ENCODE measurements at regions of chr1 and their contacts with region 1.

Region 1: DNA sequence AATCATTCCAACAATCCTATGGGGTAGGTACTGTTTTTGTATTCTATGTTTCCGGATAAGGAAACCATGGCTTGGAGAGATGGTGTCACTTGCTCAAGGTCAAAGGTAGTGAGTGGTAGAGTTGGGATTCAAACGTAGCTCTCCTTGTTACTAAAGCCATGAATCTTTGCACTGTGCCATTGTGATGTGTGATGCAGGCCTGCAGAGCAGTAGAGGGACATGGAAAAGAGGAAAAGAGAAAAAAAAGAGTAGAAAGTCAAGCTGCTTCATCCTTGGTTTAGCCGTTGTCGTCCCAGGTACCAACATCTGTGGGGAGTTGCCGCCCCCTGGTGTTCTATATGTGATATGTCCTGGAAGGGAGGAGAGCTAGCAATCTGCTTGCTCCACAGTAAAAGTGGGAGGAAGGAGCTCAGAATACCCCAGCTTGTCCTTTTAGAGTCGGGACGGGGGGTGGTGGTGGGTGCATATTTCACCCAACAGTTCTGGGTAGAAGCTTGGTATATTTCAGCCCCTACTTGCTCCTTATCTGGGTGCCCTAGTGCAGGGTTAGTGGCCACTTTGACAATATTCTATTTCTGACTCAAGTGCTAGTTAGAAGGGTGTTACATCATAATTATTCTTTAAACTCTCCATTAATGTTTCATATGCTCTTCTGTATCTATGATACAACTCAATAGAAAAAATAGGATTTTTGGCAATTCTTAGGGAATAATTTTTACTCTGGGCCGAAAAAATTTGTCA is 98.4 kb downstream of the EBNA1BP2 start:
- ATAC-seq: peak; percentile 77 to 95 (median 86)
- H3K4me3 ChIP-seq: peak overlapping the region in 1 of 5 donors; percentile 9
- H3K27ac ChIP-seq: no peak overlapping the region
- H3K4me1 ChIP-seq: peaks cover 21 to 23% of the 10 kb centered on the region in 2 donors

Region 2: GRCh38 chr1:42551180-42551579 is 522.5 kb before region 1 on chr1:
- in situ Hi-C with region 1: loop called in 1 of 9 experiments (anchors 25 kb)
- ATAC-seq: no peak
- H3K4me3 ChIP-seq: no peak overlapping the region
- H3K27ac ChIP-seq: no peak overlapping the region
- H3K4me1 ChIP-seq: no peaks in the 10 kb centered on the region

Region 3: GRCh38 chr1:42777852-42778251 is 295.8 kb before region 1 on chr1:
- in situ Hi-C with region 1: loop called in 4 of 9 experiments (anchors 25 kb)
- ATAC-seq: peak in 6 of 8 experiments; percentile 51 to 83 (median 65)
- H3K4me3 ChIP-seq: no peak overlapping the region
- H3K27ac ChIP-seq: no peak overlapping the region
- H3K4me1 ChIP-seq: no peaks in the 10 kb centered on the region

Region 4: DNA sequence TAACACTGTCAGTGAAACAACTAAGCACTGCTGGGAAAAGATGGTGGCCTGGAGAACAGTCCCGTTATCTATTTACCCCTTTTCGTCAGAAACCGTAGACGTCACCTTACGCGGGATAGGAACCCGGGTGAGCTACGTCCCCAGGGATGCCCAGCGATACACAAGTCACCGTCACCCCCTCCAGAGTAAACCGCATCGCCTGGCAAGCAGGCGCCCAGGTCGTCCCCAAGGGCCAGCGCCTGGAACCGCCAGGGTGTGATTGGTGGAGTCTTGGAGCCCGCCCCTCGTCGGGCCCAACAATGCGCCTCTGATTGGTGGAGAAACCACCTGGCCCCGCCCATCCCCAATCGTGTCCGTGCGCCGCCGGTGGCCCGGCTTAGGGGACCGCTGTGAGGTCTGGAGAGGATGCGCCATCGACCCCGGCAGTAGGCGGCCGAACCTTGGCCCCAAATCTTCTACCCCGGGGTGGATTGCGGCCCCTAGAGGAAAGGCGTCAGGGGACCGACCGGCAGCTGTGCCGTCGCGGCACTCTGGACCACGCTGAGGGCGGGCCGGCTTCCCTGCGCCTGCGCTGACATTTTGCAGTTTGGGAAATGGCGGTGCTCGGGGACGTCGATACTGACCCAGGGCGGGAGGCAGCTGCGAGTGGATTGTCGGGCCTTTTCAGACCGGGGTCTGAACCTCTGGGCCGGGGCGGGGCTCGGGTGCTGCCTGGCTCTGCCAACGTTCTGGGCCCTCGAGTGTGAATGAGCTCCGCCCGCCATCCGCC is 149.4 kb before region 1 on chr1:
- in situ Hi-C with region 1: loop called in 7 of 9 experiments (anchors 10 to 25 kb)
- ATAC-seq: peak; percentile 73 to 95 (median 92)
- H3K4me3 ChIP-seq: peak overlapping the region; percentile 51 to 68 (median 52)
- H3K27ac ChIP-seq: peak overlapping the region; percentile 93 to 96
- H3K4me1 ChIP-seq: peaks cover 16 to 19% of the 10 kb centered on the region in 2 donors

Measured in motor neuron (in vitro differentiated cells).